ENCODE measurements at regions of chr19 and their contacts with region 1.

Region 1: DNA sequence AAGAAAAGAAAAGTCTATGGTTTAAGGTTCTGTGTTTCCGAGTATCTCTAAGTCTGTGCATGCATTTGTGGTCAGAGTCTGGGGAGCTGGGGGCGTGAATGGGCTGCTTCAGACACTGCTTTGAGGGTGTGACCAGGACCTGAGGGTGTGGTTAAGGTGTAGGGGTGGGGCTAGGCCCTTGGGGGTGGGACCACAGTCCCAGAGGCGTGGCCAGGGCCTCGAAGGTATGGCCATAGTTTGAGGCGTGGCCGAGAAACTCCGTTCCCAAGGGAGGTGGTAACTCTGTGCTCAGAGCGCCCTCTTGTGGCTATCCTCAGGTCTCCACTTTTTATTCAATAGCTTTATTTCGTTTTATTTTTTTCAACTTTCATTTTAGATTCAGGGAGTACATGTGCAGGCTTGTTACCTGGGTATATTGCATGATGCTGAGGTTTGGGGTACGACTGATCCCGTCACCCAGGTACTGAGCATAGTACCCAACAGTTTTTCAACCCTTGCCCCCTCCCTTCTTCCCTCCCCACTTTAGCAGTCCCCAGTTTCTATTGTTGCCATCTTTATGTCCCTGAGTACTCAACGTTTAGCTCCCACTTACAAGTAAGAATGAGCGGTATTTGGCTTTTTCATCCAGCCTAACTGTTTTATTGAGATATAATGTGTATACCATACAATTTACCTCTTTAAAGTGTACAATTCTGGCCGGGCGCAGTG is 7.0 kb upstream of the CBLC start:
- DNase-seq: peak; percentile 92
- H3K4me3 ChIP-seq: no peak overlapping the region
- H3K27ac ChIP-seq: no peak overlapping the region
- H3K4me1 ChIP-seq: no peaks in the 10 kb centered on the region
- H3K27me3 ChIP-seq: no peaks in the 10 kb centered on the region
- CTCF ChIP-seq: peak; percentile 85

Region 2: DNA sequence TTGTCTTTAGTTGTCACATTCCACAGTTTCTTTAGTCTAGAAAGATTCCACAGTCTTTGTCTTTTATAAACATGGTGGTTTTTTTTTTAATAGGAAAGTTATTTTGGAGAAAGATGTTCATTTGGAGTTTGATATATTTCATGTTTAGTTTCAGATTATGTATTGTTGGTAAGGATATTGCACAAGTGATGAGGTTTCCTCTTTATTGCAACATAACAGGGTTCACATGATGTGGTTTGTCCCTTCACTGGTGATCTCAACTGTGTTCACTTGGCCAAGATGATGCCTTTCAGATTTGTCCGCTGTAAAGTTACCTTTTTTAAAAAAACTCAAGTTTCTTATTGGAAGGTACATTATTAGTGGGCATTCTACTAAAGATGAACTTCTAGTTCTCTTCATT is 764.7 kb before region 1 on chr19:
- CTCF ChIA-PET with region 1: no interaction called
- POLR2A ChIA-PET with region 1: no interaction called
- intact Hi-C with region 1: no loop called
- DNase-seq: no peak
- H3K4me3 ChIP-seq: no peak overlapping the region
- H3K27ac ChIP-seq: no peak overlapping the region
- H3K4me1 ChIP-seq: peaks cover 3% of the 10 kb centered on the region
- H3K27me3 ChIP-seq: no peaks in the 10 kb centered on the region
- CTCF ChIP-seq: no peak

Region 3: DNA sequence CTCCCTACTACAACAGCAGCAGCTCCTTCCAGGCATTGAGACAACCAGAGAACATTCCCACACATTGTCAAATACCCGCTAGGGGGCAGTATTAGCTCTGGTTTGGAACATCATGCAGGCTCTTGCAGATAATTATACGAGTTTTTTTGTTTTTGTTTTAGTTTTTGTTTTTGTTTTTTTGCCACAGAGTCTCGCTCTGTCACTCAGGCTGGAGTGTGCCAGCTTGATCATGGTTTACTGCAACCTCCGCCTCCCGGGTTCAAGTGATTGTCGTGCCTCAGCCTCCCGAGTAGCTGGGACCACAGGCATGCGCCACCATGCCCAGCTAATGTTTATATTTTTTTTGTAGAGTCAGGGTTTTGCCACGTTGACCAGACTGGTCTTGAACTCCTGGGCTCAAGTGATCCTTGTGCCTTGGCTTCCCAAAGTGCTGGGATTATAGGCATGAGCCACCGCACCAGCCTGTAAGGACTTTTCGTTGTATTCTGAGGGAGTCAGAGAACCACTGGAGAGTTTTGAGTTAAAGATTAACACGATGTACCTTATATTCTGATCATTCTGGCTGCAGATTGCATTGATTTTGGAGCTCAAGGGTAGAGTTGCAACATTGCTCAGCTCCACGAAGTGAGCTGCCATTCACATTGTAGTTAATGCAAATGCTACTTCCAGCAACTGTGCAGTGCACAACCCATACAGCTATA is 199.6 kb before region 1 on chr19:
- CTCF ChIA-PET with region 1: interaction called, 10 read pairs
- POLR2A ChIA-PET with region 1: no interaction called
- intact Hi-C with region 1: no loop called
- DNase-seq: peak; percentile 88
- H3K4me3 ChIP-seq: no peak overlapping the region
- H3K27ac ChIP-seq: no peak overlapping the region
- H3K4me1 ChIP-seq: peaks cover 7% of the 10 kb centered on the region
- H3K27me3 ChIP-seq: no peaks in the 10 kb centered on the region
- CTCF ChIP-seq: peak; percentile 85

Region 4: DNA sequence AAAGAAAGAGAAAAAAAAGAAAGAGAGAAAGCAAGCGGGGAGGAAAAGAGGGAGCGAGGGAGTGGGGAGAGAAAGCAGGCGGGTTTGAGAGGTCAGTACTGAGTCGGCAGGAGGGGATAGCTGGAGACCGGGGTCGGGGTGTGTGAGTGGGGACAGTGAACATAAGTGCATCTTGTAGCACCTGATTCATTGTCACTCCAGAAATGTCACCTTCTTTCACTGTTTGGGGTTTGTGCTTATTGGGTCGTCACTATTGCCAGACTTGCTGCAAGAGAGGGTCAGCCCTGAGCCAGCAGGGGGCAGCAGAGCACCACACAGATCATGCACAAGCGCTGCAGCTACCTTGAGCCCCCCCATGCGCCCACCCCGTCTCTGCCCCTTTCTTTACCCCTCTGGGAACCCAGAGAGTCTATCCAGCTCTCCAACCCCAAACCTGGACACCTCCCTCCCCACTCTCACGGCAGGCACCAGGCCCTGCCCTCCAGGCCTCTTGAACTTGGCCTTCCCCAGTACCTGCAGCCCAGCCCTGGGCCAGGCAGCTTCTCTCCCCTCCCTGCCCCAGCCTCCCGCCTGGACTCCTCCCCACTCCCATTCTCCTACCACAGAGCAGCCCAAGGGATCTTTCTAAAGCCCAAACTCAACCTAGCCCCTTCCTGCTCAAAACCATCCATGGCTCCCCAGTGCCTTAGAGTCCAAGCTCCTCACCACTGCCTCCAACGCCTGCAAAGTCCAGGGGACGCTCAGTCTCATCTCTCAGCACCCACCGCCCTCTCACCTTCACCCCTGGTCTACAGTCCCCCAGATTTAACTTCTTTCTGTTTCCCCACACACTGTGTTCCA is 81.4 kb before region 1 on chr19:
- CTCF ChIA-PET with region 1: interaction called, 7 read pairs
- POLR2A ChIA-PET with region 1: no interaction called
- intact Hi-C with region 1: loop called (anchors 1 kb)
- DNase-seq: peak; percentile 76
- H3K4me3 ChIP-seq: peak overlapping the region; percentile 11
- H3K27ac ChIP-seq: no peak overlapping the region
- H3K4me1 ChIP-seq: no peaks in the 10 kb centered on the region
- H3K27me3 ChIP-seq: no peaks in the 10 kb centered on the region
- CTCF ChIP-seq: peak; percentile 92

Region 5: GRCh38 chr19:44723952-44724319 is 46.8 kb before region 1 on chr19:
- CTCF ChIA-PET with region 1: interaction called, 122 read pairs
- POLR2A ChIA-PET with region 1: no interaction called
- intact Hi-C with region 1: loop called (anchors 1 kb)
- DNase-seq: peak; percentile 81
- H3K4me3 ChIP-seq: no peak overlapping the region
- H3K27ac ChIP-seq: no peak overlapping the region
- H3K4me1 ChIP-seq: no peaks in the 10 kb centered on the region
- H3K27me3 ChIP-seq: no peaks in the 10 kb centered on the region
- CTCF ChIP-seq: peak; percentile 95

Region 6: DNA sequence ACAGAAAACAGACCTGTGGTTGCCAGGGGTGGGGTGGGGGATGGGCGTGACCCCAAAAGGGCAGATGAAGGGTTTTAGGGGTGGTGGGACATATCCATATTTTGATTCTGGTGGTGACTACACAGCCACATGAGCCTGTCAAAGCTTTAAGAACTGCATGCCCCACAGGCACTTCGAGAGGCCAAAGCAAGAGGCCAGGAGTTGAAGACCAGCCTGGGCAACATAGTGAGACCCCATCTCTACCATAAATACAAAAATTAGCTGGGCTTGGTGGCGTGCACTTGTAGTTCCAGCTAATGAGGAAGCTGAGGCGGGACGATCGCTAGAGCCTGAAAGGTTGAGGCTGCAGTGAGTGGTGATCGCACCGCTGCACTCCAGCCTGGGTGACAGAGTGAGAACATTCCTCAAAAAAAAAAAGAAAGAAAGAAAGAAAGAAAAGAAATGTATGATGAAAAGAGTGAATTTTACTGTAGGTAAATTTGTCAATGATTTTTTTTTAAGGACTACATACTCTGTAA is 41.1 kb before region 1 on chr19:
- CTCF ChIA-PET with region 1: interaction called, 122 read pairs
- POLR2A ChIA-PET with region 1: no interaction called
- intact Hi-C with region 1: loop called (anchors 1 kb)
- DNase-seq: no peak
- H3K4me3 ChIP-seq: no peak overlapping the region
- H3K27ac ChIP-seq: no peak overlapping the region
- H3K4me1 ChIP-seq: no peaks in the 10 kb centered on the region
- H3K27me3 ChIP-seq: no peaks in the 10 kb centered on the region
- CTCF ChIP-seq: no peak

Measured in A673 (cell line).